OCI-LY7 (cell line): ENCODE measurements at regions of chr12 and their contacts with region 1.

Region 1: GRCh38 chr12:117002051-117002817 is 91.5 kb downstream of the FBXW8 start:
- DNase-seq: no peak
- H3K4me3 ChIP-seq: no peak overlapping the region
- H3K27ac ChIP-seq: no peak overlapping the region
- H3K4me1 ChIP-seq: peaks cover 6% of the 10 kb centered on the region
- CTCF ChIP-seq: no peak

Region 2: GRCh38 chr12:116990971-116991966 is 11.0 kb before region 1 on chr12:
- CTCF ChIA-PET with region 1: no interaction called
- POLR2A ChIA-PET with region 1: interaction called, 17 read pairs
- intact Hi-C with region 1: no loop called
- DNase-seq: no peak
- H3K4me3 ChIP-seq: no peak overlapping the region
- H3K27ac ChIP-seq: no peak overlapping the region
- H3K4me1 ChIP-seq: no peaks in the 10 kb centered on the region
- CTCF ChIP-seq: no peak

Region 3: GRCh38 chr12:117052386-117053049 is 50.3 kb after region 1 on chr12:
- CTCF ChIA-PET with region 1: no interaction called
- POLR2A ChIA-PET with region 1: no interaction called
- intact Hi-C with region 1: no loop called
- DNase-seq: no peak
- H3K4me3 ChIP-seq: no peak overlapping the region
- H3K27ac ChIP-seq: no peak overlapping the region
- H3K4me1 ChIP-seq: peaks cover 8% of the 10 kb centered on the region
- CTCF ChIP-seq: no peak